ENCODE measurements at regions of chr12 and their contacts with region 1.

Region 1: GRCh38 chr12:4857472-4858291 is 52.0 kb upstream of the KCNA1 start:
- DNase-seq: peak; percentile 78
- H3K4me3 ChIP-seq: no peak overlapping the region
- H3K27ac ChIP-seq: peak overlapping the region in 1 of 3 donors; percentile 26
- H3K4me1 ChIP-seq: peaks cover 9 to 13% of the 10 kb centered on the region in 2 donors
- H3K27me3 ChIP-seq: no peaks in the 10 kb centered on the region
- CTCF ChIP-seq: peak; percentile 67 to 86 (median 78)
- POLR2A ChIP-seq: no peak

Region 2: DNA sequence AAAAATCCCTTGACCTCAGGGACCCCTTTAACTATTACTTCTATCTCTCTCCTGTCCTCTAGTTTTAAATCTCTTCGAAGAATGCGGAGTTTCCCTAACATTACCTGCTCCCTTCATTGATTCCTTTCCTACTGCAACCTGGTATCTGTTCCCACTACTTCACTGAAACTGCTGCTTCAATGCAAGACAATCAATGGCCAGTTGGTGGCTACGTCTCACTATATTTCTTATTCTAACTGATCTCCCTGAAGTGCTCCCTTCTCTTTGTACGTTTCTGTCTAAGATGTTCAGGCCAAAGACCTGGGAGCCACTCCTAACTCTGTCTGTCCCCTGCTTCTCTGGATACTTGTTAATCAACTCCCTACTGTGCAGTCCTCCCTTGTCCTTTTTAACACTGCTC is 41.7 kb after region 1 on chr12:
- intact Hi-C with region 1: no loop called
- DNase-seq: peak; percentile 19 to 23
- H3K4me3 ChIP-seq: no peak overlapping the region
- H3K27ac ChIP-seq: no peak overlapping the region
- H3K4me1 ChIP-seq: no peaks in the 10 kb centered on the region
- H3K27me3 ChIP-seq: no peaks in the 10 kb centered on the region
- CTCF ChIP-seq: peak in 4 of 6 experiments; percentile 5 to 62 (median 46)
- POLR2A ChIP-seq: no peak

Region 3: GRCh38 chr12:5003020-5003666 is 145.5 kb after region 1 on chr12:
- intact Hi-C with region 1: loop called (anchors 5 kb)
- DNase-seq: peak; percentile 75 to 82
- H3K4me3 ChIP-seq: no peak overlapping the region
- H3K27ac ChIP-seq: no peak overlapping the region
- H3K4me1 ChIP-seq: no peaks in the 10 kb centered on the region
- H3K27me3 ChIP-seq: no peaks in the 10 kb centered on the region
- CTCF ChIP-seq: peak; percentile 82 to 99 (median 94)
- POLR2A ChIP-seq: no peak

Measured in thyroid gland (tissue), 4 donors.